ENCODE measurements at regions of chr10 and their contacts with region 1.

Region 1: GRCh38 chr10:5960070-5960972 is 17.0 kb downstream of the IL15RA start:
- DNase-seq: no peak
- H3K4me3 ChIP-seq: no peak overlapping the region
- H3K27ac ChIP-seq: no peak overlapping the region
- H3K4me1 ChIP-seq: peaks cover 12% of the 10 kb centered on the region
- H3K27me3 ChIP-seq: no peaks in the 10 kb centered on the region
- CTCF ChIP-seq: no peak
- POLR2A ChIP-seq: no peak

Region 2: GRCh38 chr10:5971315-5971832 is 11.1 kb after region 1 on chr10:
- CTCF ChIA-PET with region 1: interaction called, 10 read pairs
- POLR2A ChIA-PET with region 1: no interaction called
- dilution Hi-C with region 1: no loop called
- intact Hi-C with region 1: no loop called
- DNase-seq: peak; percentile 88
- H3K4me3 ChIP-seq: peak overlapping the region in 1 of 3 experiments; percentile 28
- H3K27ac ChIP-seq: peak overlapping the region; percentile 88
- H3K4me1 ChIP-seq: peaks cover 40% of the 10 kb centered on the region
- H3K27me3 ChIP-seq: no peaks in the 10 kb centered on the region
- CTCF ChIP-seq: no peak
- POLR2A ChIP-seq: no peak

Region 3: GRCh38 chr10:6014241-6014761 is 54.0 kb after region 1 on chr10:
- CTCF ChIA-PET with region 1: interaction called, 11 read pairs
- POLR2A ChIA-PET with region 1: no interaction called
- dilution Hi-C with region 1: no loop called
- intact Hi-C with region 1: no loop called
- DNase-seq: peak; percentile 53
- H3K4me3 ChIP-seq: no peak overlapping the region
- H3K27ac ChIP-seq: no peak overlapping the region
- H3K4me1 ChIP-seq: no peaks in the 10 kb centered on the region
- H3K27me3 ChIP-seq: peaks cover 0 to 6% of the 10 kb centered on the region in 2 experiments
- CTCF ChIP-seq: peak; percentile 58 to 60
- POLR2A ChIP-seq: no peak